ENCODE measurements at regions of chr1 and their contacts with region 1.

Region 1: DNA sequence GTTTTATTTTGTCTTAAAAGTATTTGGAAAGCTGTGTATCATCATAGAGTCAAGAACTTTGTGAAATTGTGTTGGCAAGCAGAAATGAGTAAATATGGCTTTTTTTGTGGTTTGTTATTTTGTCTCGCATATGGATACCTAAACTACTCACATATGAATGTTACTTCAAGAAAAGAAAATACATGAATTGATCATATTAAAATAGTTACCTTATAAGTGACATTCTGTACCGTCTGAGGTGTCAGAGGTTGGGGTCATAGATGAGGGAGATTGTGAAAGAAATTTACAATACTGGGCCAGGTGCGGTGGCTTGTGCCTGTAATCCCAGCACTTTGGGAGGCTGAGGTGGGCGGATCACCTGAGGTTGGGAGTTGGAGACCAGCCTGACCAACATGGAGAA is 31.3 kb upstream of the AXDND1 start:
- DNase-seq: no peak
- H3K4me3 ChIP-seq: no peak overlapping the region
- H3K4me3 Mint-ChIP-seq: no peak overlapping the region
- H3K27ac ChIP-seq: no peak overlapping the region
- H3K27ac Mint-ChIP-seq: peak overlapping the region in 2 of 7 donors; percentile 26 to 27
- H3K4me1 ChIP-seq: peaks cover 17% of the 10 kb centered on the region in 2 donors
- H3K4me1 Mint-ChIP-seq: peaks cover 30% of the 10 kb centered on the region
- H3K27me3 ChIP-seq: no peaks in the 10 kb centered on the region
- H3K27me3 Mint-ChIP-seq: no peaks in the 10 kb centered on the region
- CTCF ChIP-seq: no peak

Region 2: DNA sequence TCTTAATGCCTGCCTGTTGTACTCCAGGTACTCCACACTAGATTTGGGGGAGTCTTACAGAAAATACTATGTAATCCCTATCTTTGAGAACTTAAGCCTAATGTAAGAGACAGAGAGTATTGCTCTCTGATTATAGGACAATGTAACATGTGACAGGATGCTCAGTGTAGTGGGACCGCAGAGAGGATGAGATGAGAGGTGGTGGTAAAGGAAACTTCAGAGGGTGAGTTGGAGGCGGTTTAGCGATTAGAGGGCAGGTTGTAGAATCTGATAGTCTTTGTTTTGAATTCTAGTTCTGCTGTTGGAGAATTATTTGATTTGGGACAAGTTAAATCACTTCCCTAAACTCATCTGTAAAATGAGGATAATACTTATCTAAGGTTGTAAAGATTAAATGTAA is 35.5 kb before region 1 on chr1:
- intact Hi-C with region 1: loop called in 1 of 2 experiments (anchors 5 kb)
- DNase-seq: no peak
- H3K4me3 ChIP-seq: no peak overlapping the region
- H3K4me3 Mint-ChIP-seq: no peak overlapping the region
- H3K27ac ChIP-seq: peak overlapping the region in 1 of 2 donors; percentile 9
- H3K27ac Mint-ChIP-seq: peak overlapping the region in 6 of 7 donors; percentile 5 to 43 (median 17)
- H3K4me1 ChIP-seq: peaks cover 34 to 54% of the 10 kb centered on the region in 2 donors
- H3K4me1 Mint-ChIP-seq: peaks cover 67% of the 10 kb centered on the region
- H3K27me3 ChIP-seq: no peaks in the 10 kb centered on the region
- H3K27me3 Mint-ChIP-seq: no peaks in the 10 kb centered on the region
- CTCF ChIP-seq: no peak